CD4-positive, alpha-beta T cell (primary cell): ENCODE measurements at regions of chr11 and their contacts with region 1.

Region 1: GRCh38 chr11:130131961-130132850 is 27.4 kb upstream of the ST14 start:
- DNase-seq: peak in 13 of 14 experiments; percentile 9 to 80 (median 37)
- ATAC-seq: peak; percentile 88
- H3K4me3 ChIP-seq: no peak overlapping the region
- H3K4me3 Mint-ChIP-seq: no peak overlapping the region
- H3K27ac ChIP-seq: no peak overlapping the region
- H3K27ac Mint-ChIP-seq: no peak overlapping the region
- H3K4me1 ChIP-seq: no peaks in the 10 kb centered on the region
- H3K4me1 Mint-ChIP-seq: no peaks in the 10 kb centered on the region
- H3K27me3 ChIP-seq: no peaks in the 10 kb centered on the region
- H3K27me3 Mint-ChIP-seq: no peaks in the 10 kb centered on the region
- CTCF ChIP-seq: peak; percentile 91

Region 2: GRCh38 chr11:129117595-129118350 is 1014.4 kb before region 1 on chr11:
- CTCF ChIA-PET with region 1: no interaction called
- POLR2A ChIA-PET with region 1: no interaction called
- intact Hi-C with region 1: loop called in 1 of 2 experiments (anchors 5 kb)
- DNase-seq: peak in 12 of 14 experiments; percentile 12 to 76 (median 26)
- ATAC-seq: no peak
- H3K4me3 ChIP-seq: no peak overlapping the region
- H3K4me3 Mint-ChIP-seq: no peak overlapping the region
- H3K27ac ChIP-seq: no peak overlapping the region
- H3K27ac Mint-ChIP-seq: no peak overlapping the region
- H3K4me1 ChIP-seq: no peaks in the 10 kb centered on the region
- H3K4me1 Mint-ChIP-seq: no peaks in the 10 kb centered on the region
- H3K27me3 ChIP-seq: no peaks in the 10 kb centered on the region
- H3K27me3 Mint-ChIP-seq: no peaks in the 10 kb centered on the region
- CTCF ChIP-seq: peak; percentile 83

Region 3: GRCh38 chr11:129766898-129767604 is 365.2 kb before region 1 on chr11:
- CTCF ChIA-PET with region 1: interaction called, 5 read pairs
- POLR2A ChIA-PET with region 1: no interaction called
- intact Hi-C with region 1: loop called (anchors 5 kb)
- DNase-seq: peak in 9 of 14 experiments; percentile 5 to 53 (median 23)
- ATAC-seq: peak; percentile 41
- H3K4me3 ChIP-seq: no peak overlapping the region
- H3K4me3 Mint-ChIP-seq: no peak overlapping the region
- H3K27ac ChIP-seq: no peak overlapping the region
- H3K27ac Mint-ChIP-seq: no peak overlapping the region
- H3K4me1 ChIP-seq: no peaks in the 10 kb centered on the region
- H3K4me1 Mint-ChIP-seq: peaks cover 6% of the 10 kb centered on the region
- H3K27me3 ChIP-seq: no peaks in the 10 kb centered on the region
- H3K27me3 Mint-ChIP-seq: peaks cover 11% of the 10 kb centered on the region
- CTCF ChIP-seq: peak; percentile 56

Region 4: GRCh38 chr11:129853518-129854236 is 278.5 kb before region 1 on chr11:
- CTCF ChIA-PET with region 1: no interaction called
- POLR2A ChIA-PET with region 1: no interaction called
- intact Hi-C with region 1: no loop called
- DNase-seq: peak; percentile 72 to 92 (median 86)
- ATAC-seq: peak; percentile 93
- H3K4me3 ChIP-seq: peak overlapping the region; percentile 7
- H3K4me3 Mint-ChIP-seq: peak overlapping the region; percentile 73
- H3K27ac ChIP-seq: peak overlapping the region; percentile 65 to 66
- H3K27ac Mint-ChIP-seq: peak overlapping the region; percentile 97
- H3K4me1 ChIP-seq: peaks cover 29% of the 10 kb centered on the region
- H3K4me1 Mint-ChIP-seq: peaks cover 53% of the 10 kb centered on the region
- H3K27me3 ChIP-seq: no peaks in the 10 kb centered on the region
- H3K27me3 Mint-ChIP-seq: no peaks in the 10 kb centered on the region
- CTCF ChIP-seq: no peak

Region 5: GRCh38 chr11:129881570-129882170 is 250.5 kb before region 1 on chr11:
- CTCF ChIA-PET with region 1: interaction called, 6 read pairs
- POLR2A ChIA-PET with region 1: interaction called, 3 read pairs
- intact Hi-C with region 1: loop called in 1 of 2 experiments (anchors 2 kb)
- DNase-seq: peak; percentile 21 to 65 (median 44)
- ATAC-seq: peak; percentile 87
- H3K4me3 ChIP-seq: no peak overlapping the region
- H3K4me3 Mint-ChIP-seq: no peak overlapping the region
- H3K27ac ChIP-seq: no peak overlapping the region
- H3K27ac Mint-ChIP-seq: no peak overlapping the region
- H3K4me1 ChIP-seq: no peaks in the 10 kb centered on the region
- H3K4me1 Mint-ChIP-seq: peaks cover 4% of the 10 kb centered on the region
- H3K27me3 ChIP-seq: no peaks in the 10 kb centered on the region
- H3K27me3 Mint-ChIP-seq: no peaks in the 10 kb centered on the region
- CTCF ChIP-seq: peak; percentile 55

Region 6: GRCh38 chr11:129930296-129930695 is 201.9 kb before region 1 on chr11:
- CTCF ChIA-PET with region 1: interaction called, 12 read pairs
- POLR2A ChIA-PET with region 1: interaction called, 6 read pairs
- intact Hi-C with region 1: no loop called
- DNase-seq: peak in 2 of 14 experiments; percentile 39 to 48
- ATAC-seq: no peak
- H3K4me3 ChIP-seq: no peak overlapping the region
- H3K4me3 Mint-ChIP-seq: no peak overlapping the region
- H3K27ac ChIP-seq: peak overlapping the region in 1 of 2 donors; percentile 22
- H3K27ac Mint-ChIP-seq: no peak overlapping the region
- H3K4me1 ChIP-seq: no peaks in the 10 kb centered on the region
- H3K4me1 Mint-ChIP-seq: no peaks in the 10 kb centered on the region
- H3K27me3 ChIP-seq: no peaks in the 10 kb centered on the region
- H3K27me3 Mint-ChIP-seq: no peaks in the 10 kb centered on the region
- CTCF ChIP-seq: no peak

Region 7: GRCh38 chr11:130002846-130003716 is 129.1 kb before region 1 on chr11:
- CTCF ChIA-PET with region 1: interaction called, 6 read pairs
- POLR2A ChIA-PET with region 1: interaction called, 15 read pairs
- intact Hi-C with region 1: no loop called
- DNase-seq: peak; percentile 81 to 97 (median 88)
- ATAC-seq: peak; percentile 78
- H3K4me3 ChIP-seq: peak overlapping the region; percentile 76
- H3K4me3 Mint-ChIP-seq: peak overlapping the region; percentile 100
- H3K27ac ChIP-seq: peak overlapping the region; percentile 98 to 100
- H3K27ac Mint-ChIP-seq: peak overlapping the region; percentile 100
- H3K4me1 ChIP-seq: peaks cover 23% of the 10 kb centered on the region
- H3K4me1 Mint-ChIP-seq: peaks cover 44% of the 10 kb centered on the region
- H3K27me3 ChIP-seq: no peaks in the 10 kb centered on the region
- H3K27me3 Mint-ChIP-seq: no peaks in the 10 kb centered on the region
- CTCF ChIP-seq: no peak

Region 8: DNA sequence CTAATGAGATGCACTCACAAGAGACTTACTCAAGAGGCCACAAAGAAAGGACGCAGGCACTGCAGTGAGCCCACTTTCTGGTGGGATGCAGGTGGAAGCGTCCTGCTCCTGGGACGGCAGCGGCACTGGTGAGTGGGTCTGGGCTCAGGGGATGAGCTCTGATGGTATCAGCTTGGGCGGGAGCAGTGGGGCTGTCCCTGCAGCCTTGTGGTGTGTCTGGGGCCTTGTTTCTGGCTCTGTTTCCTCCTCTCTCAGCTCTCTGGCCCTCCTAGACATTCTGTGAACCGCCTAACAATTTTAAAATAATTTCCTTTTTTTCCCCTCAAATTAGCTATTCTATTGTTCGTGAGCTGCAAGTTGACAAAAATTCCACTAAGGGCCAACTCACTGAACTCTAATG is 18.6 kb after region 1 on chr11:
- CTCF ChIA-PET with region 1: no interaction called
- POLR2A ChIA-PET with region 1: no interaction called
- intact Hi-C with region 1: no loop called
- DNase-seq: no peak
- ATAC-seq: no peak
- H3K4me3 ChIP-seq: no peak overlapping the region
- H3K4me3 Mint-ChIP-seq: no peak overlapping the region
- H3K27ac ChIP-seq: no peak overlapping the region
- H3K27ac Mint-ChIP-seq: no peak overlapping the region
- H3K4me1 ChIP-seq: peaks cover 16% of the 10 kb centered on the region
- H3K4me1 Mint-ChIP-seq: peaks cover 20% of the 10 kb centered on the region
- H3K27me3 ChIP-seq: peaks cover 0 to 2% of the 10 kb centered on the region in 2 experiments
- H3K27me3 Mint-ChIP-seq: peaks cover 1% of the 10 kb centered on the region
- CTCF ChIP-seq: no peak

Region 9: DNA sequence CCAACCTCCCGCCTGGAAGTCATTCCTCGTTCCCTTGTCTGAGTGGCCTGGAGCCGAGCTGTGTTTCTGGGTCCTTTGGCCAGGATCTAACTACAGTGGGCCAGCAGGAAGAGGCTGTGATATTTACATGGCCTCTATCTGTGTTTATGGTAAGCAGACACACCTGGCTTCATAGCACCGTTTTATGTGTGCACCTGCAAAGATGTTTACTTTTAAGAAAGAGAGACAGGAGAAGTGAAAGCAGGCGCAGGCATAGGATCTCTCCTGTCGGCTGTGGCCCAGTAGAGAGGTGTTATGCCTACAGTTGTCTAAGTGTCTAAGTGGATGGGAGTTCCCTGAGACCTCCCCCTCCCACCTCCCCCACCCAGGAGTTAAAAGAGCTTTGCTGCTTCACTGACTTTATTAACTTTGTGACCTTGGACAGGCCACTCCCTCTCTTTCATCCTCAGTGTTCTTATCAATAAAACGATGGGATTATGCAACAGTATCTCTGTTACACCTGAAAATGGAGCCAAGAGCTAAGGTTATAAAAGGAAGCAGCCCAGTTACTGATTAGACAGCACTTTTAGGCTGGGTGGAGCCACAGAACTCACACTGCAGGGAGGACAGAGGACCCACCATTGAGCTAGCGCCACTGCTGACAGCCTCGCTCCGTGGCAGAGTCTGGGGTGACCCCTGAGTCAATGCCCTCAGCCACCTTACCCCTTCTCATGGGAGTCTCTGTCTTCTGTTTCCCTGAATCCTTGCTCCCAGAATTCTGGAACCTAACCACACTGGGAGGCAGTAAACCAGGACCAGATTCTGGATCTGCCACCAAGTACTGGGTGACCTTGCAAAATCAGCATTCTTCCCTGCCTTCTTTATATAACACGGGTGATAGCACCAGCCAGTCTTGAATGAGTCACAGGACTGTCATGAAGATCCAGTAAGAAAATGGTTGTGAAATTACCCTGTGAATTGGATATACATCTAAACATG is 49.4 kb after region 1 on chr11:
- CTCF ChIA-PET with region 1: no interaction called
- POLR2A ChIA-PET with region 1: no interaction called
- intact Hi-C with region 1: no loop called
- DNase-seq: no peak
- ATAC-seq: no peak
- H3K4me3 ChIP-seq: no peak overlapping the region
- H3K4me3 Mint-ChIP-seq: no peak overlapping the region
- H3K27ac ChIP-seq: no peak overlapping the region
- H3K27ac Mint-ChIP-seq: no peak overlapping the region
- H3K4me1 ChIP-seq: no peaks in the 10 kb centered on the region
- H3K4me1 Mint-ChIP-seq: no peaks in the 10 kb centered on the region
- H3K27me3 ChIP-seq: peaks cover 3 to 5% of the 10 kb centered on the region in 2 experiments
- H3K27me3 Mint-ChIP-seq: peaks cover 11% of the 10 kb centered on the region
- CTCF ChIP-seq: no peak